CD4-positive, alpha-beta memory T cell (primary cell): ENCODE measurements at regions of chr14 and their contacts with region 1.

Region 1: DNA sequence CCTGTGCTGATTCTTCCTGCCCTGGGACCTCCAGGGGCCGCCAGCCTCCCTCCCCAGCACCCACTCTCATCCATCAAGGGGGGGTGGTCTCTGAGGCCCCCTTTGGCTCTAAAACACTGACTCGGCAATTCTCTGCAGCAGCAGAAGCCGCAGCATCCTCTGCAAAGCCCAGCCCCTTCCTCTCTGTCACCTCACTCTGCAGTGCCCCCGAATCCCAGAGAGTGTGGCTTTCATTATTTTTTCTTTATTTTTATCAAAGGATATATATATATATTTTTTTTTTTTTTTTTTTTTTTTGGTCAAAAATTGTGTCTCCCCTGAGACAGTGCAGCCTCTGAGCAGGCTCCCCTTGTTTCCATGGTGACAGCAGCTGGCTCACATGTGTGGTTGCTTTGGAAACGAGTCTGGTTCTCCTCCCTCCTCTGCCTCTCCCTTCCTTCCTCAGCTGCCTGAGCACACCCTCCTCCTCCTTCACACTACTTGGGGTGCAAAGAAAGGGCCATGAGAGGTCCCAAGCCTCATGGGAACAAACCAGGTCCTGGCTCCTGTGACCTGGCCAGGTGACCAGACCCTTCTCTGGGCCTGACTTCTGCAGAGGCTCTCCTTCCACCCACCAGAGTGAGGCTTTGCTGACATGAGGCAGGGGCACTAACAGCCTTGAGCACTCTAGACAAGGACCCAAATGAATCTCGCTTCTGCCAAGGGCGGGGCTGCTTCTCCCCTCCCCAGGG is 100.5 kb downstream of the LRRC74A start:
- DNase-seq: peak; percentile 75 to 96 (median 83)
- H3K4me3 ChIP-seq: peak overlapping the region; percentile 3 to 51
- H3K4me3 Mint-ChIP-seq: peak overlapping the region; percentile 71 to 90 (median 82)
- H3K27ac ChIP-seq: peak overlapping the region; percentile 89
- H3K27ac Mint-ChIP-seq: peak overlapping the region; percentile 83 to 99 (median 97)
- H3K4me1 ChIP-seq: peaks cover 78% of the 10 kb centered on the region
- H3K4me1 Mint-ChIP-seq: peaks cover 59 to 97% (median 80%) of the 10 kb centered on the region in 4 donors
- H3K27me3 ChIP-seq: no peaks in the 10 kb centered on the region
- H3K27me3 Mint-ChIP-seq: no peaks in the 10 kb centered on the region

Region 2: DNA sequence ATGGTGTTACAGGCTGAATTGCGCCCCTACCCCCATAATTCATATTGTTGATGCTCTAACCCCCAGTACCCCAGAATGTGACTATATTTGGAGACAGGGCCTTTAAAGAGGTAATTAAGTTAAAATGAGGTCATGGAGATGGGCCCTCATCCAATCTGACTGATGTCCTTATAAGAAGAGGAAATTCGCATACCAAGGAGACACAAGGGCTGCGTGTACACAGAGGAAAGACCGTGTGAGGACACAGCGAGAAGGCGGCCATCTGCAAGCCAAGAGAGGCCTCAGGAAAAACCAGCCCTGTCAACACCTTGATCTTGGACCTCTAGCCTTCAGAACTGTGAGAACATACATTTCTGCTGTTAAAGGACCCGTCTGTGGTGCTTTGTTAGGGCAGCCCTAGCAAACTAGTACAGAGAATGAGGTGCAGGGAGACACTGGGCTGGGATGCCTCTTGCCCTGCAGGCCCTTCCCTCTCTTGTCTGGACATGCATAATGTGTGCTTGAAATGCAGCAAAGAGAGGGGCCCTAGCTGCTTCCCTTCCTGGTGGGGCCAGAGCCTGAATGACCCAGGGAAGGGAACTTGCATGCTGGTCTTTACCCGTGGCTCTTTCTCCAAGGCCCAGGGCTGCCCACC is 825.2 kb before region 1 on chr14:
- CTCF ChIA-PET with region 1: no interaction called
- POLR2A ChIA-PET with region 1: no interaction called
- intact Hi-C with region 1: no loop called
- DNase-seq: no peak
- H3K4me3 ChIP-seq: no peak overlapping the region
- H3K4me3 Mint-ChIP-seq: no peak overlapping the region
- H3K27ac ChIP-seq: no peak overlapping the region
- H3K27ac Mint-ChIP-seq: no peak overlapping the region
- H3K4me1 ChIP-seq: no peaks in the 10 kb centered on the region
- H3K4me1 Mint-ChIP-seq: no peaks in the 10 kb centered on the region
- H3K27me3 ChIP-seq: no peaks in the 10 kb centered on the region
- H3K27me3 Mint-ChIP-seq: peaks cover 11 to 17% of the 10 kb centered on the region in 2 donors

Region 3: GRCh38 chr14:76937181-76938091 is 10.8 kb after region 1 on chr14:
- CTCF ChIA-PET with region 1: interaction called, 5 read pairs
- POLR2A ChIA-PET with region 1: interaction called, 11 read pairs
- intact Hi-C with region 1: no loop called
- DNase-seq: no peak
- H3K4me3 ChIP-seq: no peak overlapping the region
- H3K4me3 Mint-ChIP-seq: no peak overlapping the region
- H3K27ac ChIP-seq: no peak overlapping the region
- H3K27ac Mint-ChIP-seq: peak overlapping the region in 1 of 7 donors; percentile 48
- H3K4me1 ChIP-seq: peaks cover 4% of the 10 kb centered on the region
- H3K4me1 Mint-ChIP-seq: peaks cover 13 to 23% (median 15%) of the 10 kb centered on the region in 4 donors
- H3K27me3 ChIP-seq: no peaks in the 10 kb centered on the region
- H3K27me3 Mint-ChIP-seq: no peaks in the 10 kb centered on the region

Region 4: DNA sequence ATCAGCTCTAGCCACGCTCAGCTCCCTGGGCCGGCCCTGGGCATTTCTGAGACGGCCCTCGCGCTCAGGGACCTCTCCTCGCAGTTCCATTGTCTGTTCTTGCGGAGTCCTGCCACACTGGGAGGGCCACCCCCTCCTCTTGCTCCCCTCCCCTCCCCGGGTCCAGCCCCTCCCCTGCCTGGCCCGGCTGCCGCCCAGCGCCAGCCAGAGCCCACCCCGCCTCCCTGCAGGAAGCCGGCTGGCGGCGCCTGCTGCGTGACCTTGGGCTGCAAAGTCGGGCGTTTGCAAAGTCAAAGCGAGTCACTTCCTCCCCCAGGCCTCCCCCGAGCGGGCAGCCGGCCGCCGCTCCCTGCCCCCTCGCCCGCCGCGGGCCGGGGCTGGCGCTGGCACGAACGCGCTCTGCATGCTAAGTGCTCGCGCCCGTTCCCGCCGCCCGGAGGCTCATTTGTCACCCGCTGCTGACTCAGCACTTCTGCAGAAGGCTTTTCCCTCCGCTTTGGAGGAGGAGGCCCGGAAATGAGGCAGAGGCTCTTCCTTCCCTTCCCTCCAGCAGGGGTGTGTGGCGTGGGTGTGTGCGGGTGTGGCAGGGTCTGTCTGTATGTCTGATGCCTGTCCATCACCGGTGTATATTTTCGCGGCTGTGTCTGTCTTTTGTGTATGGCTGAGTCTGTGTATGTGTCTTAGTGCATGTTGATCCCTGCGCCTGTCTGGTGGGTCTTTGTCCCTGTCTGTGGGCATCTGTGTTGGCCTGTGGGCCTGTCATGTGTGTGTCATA is 29.8 kb after region 1 on chr14:
- CTCF ChIA-PET with region 1: interaction called, 9 read pairs
- POLR2A ChIA-PET with region 1: interaction called, 51 read pairs
- intact Hi-C with region 1: loop called (anchors 1 kb)
- DNase-seq: peak; percentile 83 to 97 (median 85)
- H3K4me3 ChIP-seq: peak overlapping the region; percentile 61 to 64
- H3K4me3 Mint-ChIP-seq: peak overlapping the region; percentile 81 to 96 (median 88)
- H3K27ac ChIP-seq: peak overlapping the region; percentile 94
- H3K27ac Mint-ChIP-seq: peak overlapping the region; percentile 87 to 99 (median 98)
- H3K4me1 ChIP-seq: peaks cover 72% of the 10 kb centered on the region
- H3K4me1 Mint-ChIP-seq: peaks cover 37 to 75% (median 53%) of the 10 kb centered on the region in 4 donors
- H3K27me3 ChIP-seq: no peaks in the 10 kb centered on the region
- H3K27me3 Mint-ChIP-seq: no peaks in the 10 kb centered on the region

Region 5: GRCh38 chr14:77040059-77040740 is 113.5 kb after region 1 on chr14:
- CTCF ChIA-PET with region 1: interaction called, 360 read pairs
- POLR2A ChIA-PET with region 1: interaction called, 17 read pairs
- intact Hi-C with region 1: loop called (anchors 1 kb)
- DNase-seq: peak; percentile 96 to 99 (median 99)
- H3K4me3 ChIP-seq: peak overlapping the region; percentile 8 to 53
- H3K4me3 Mint-ChIP-seq: peak overlapping the region; percentile 84 to 93 (median 86)
- H3K27ac ChIP-seq: peak overlapping the region; percentile 95
- H3K27ac Mint-ChIP-seq: peak overlapping the region; percentile 97 to 100 (median 99)
- H3K4me1 ChIP-seq: peaks cover 94% of the 10 kb centered on the region
- H3K4me1 Mint-ChIP-seq: peaks cover 50 to 97% (median 84%) of the 10 kb centered on the region in 4 donors
- H3K27me3 ChIP-seq: no peaks in the 10 kb centered on the region
- H3K27me3 Mint-ChIP-seq: no peaks in the 10 kb centered on the region